ENCODE measurements at regions of chr10 and their contacts with region 1.

Region 1: DNA sequence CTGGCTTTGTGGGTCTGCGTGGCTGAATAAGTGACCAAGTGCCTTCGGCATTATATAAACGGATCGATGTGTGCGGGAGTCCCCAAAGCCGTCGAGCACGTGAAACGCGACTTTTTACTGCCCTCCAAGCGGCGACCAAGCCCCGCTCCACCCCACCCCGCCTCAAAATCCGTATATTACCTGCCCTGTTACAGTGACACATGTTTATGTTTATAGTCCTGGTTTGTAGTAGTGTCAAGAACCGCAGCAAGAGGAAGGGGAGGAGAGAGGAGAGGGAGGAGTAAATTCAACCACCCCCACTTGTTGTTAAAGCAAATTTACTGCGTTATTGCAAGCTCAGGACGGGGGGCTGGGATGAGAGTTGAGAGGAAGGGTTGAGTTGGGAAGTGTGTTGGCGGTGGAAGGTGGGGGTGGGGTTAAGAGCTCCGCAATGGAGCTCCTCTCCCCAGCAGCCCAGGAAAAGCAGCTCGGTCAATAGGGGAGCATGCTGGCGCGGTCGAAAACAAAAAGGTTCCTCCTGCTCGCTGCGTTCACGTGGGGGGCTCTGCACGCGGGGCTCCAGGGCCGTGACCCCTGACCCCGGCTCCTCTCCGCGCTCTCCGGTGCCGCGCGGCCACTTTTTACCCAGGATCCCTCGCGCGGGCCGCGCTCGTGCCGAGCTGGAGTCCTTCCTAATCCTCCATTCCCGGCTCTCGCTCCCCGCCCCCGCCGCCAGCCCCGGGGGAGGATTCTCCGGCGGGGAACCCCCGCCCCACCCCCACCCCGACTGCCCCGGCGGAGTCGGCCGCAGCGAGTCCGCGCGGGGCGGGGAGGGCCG is at the start of gene SKIDA1:
- DNase-seq: peak; percentile 86
- H3K4me3 ChIP-seq: peak within 1 kb of the TSS; percentile 70 to 76
- H3K27ac ChIP-seq: peak within 1 kb of the TSS; percentile 98 to 99
- H3K4me1 ChIP-seq: peaks cover 28 to 38% of the 10 kb centered on the region in 2 experiments; a peak in 3 of 4 replicates
- H3K27me3 ChIP-seq: no peaks in the 10 kb centered on the region
- CTCF ChIP-seq: no peak
- EP300 ChIP-seq: peak in 1 of 2 experiments; percentile 30; a peak in 1 of 4 replicates
- RAD21 ChIP-seq: no peak
- polyA plus RNA-seq, gene SKIDA1: 0.38 and 0.47 TPM in 2 replicates

Region 2: DNA sequence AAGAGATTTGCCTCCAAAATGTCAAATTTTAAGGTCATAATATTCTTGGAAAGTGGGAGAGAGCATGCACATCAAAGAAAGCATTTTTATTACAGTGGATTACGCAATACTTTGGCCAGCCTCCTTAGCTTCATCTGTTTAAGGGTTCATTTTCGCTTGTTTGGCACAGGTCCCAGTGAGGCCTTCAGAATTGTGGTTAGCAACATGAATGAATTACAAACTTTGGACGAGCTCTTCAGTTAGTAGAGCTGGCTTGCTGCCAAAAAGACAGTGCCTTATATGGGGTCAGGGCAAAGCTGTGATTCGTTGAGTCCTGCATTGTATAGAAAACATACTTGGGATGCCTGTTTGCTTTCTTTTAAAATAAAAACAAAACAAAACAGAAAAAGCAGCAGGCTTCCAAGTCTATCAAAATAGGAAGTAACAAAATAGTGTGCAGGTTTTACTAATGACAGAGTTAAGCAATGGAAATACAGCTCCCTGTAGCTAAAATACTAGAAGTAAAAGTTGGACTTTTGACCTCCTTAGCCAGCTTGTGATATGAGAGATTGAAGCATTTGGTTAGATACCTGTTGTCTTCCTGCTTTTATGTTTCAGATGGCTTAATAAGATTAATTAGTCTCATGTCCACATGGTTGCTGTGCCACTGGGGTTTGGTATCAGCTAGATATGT is 199.3 kb after region 1 on chr10:
- CTCF ChIA-PET with region 1: interaction called, 22 read pairs
- POLR2A ChIA-PET with region 1: interaction called, 14 read pairs
- DNase-seq: peak; percentile 61
- H3K4me3 ChIP-seq: no peak overlapping the region
- H3K27ac ChIP-seq: peak overlapping the region; percentile 62 to 87
- H3K4me1 ChIP-seq: peaks cover 39 to 44% of the 10 kb centered on the region in 2 experiments
- H3K27me3 ChIP-seq: no peaks in the 10 kb centered on the region
- CTCF ChIP-seq: no peak
- EP300 ChIP-seq: peak; percentile 31 to 68; a peak in 2 of 4 replicates
- RAD21 ChIP-seq: no peak

Measured in SK-N-SH (cell line).